A673 (cell line): ENCODE measurements at regions of chr12 and their contacts with region 1.

Region 1: GRCh38 chr12:20376984-20377383 is 8.6 kb downstream of the PDE3A start:
- DNase-seq: peak; percentile 48
- H3K4me3 ChIP-seq: no peak overlapping the region
- H3K27ac ChIP-seq: no peak overlapping the region
- H3K4me1 ChIP-seq: no peaks in the 10 kb centered on the region
- H3K27me3 ChIP-seq: peaks cover 40% of the 10 kb centered on the region
- CTCF ChIP-seq: peak; percentile 55; the same call in 1 of the 2 replicates

Region 2: GRCh38 chr12:19719672-19720071 is 657.3 kb before region 1 on chr12:
- CTCF ChIA-PET with region 1: no interaction called
- POLR2A ChIA-PET with region 1: no interaction called
- intact Hi-C with region 1: no loop called
- DNase-seq: no peak
- H3K4me3 ChIP-seq: no peak overlapping the region
- H3K27ac ChIP-seq: no peak overlapping the region
- H3K4me1 ChIP-seq: peaks cover 17% of the 10 kb centered on the region
- H3K27me3 ChIP-seq: no peaks in the 10 kb centered on the region
- CTCF ChIP-seq: no peak

Region 3: GRCh38 chr12:19739183-19739776 is 637.7 kb before region 1 on chr12:
- CTCF ChIA-PET with region 1: no interaction called
- POLR2A ChIA-PET with region 1: no interaction called
- intact Hi-C with region 1: loop called (anchors 2 kb)
- DNase-seq: peak; percentile 81
- H3K4me3 ChIP-seq: no peak overlapping the region
- H3K27ac ChIP-seq: no peak overlapping the region
- H3K4me1 ChIP-seq: no peaks in the 10 kb centered on the region
- H3K27me3 ChIP-seq: peaks cover 8% of the 10 kb centered on the region
- CTCF ChIP-seq: peak; percentile 74

Region 4: GRCh38 chr12:19757317-19757877 is 619.6 kb before region 1 on chr12:
- CTCF ChIA-PET with region 1: no interaction called
- POLR2A ChIA-PET with region 1: no interaction called
- intact Hi-C with region 1: loop called (anchors 5 kb)
- DNase-seq: peak; percentile 54
- H3K4me3 ChIP-seq: no peak overlapping the region
- H3K27ac ChIP-seq: no peak overlapping the region
- H3K4me1 ChIP-seq: no peaks in the 10 kb centered on the region
- H3K27me3 ChIP-seq: no peaks in the 10 kb centered on the region
- CTCF ChIP-seq: peak; percentile 76

Region 5: GRCh38 chr12:20578142-20578541 is 201.2 kb after region 1 on chr12:
- CTCF ChIA-PET with region 1: no interaction called
- POLR2A ChIA-PET with region 1: no interaction called
- intact Hi-C with region 1: no loop called
- DNase-seq: no peak
- H3K4me3 ChIP-seq: no peak overlapping the region
- H3K27ac ChIP-seq: no peak overlapping the region
- H3K4me1 ChIP-seq: no peaks in the 10 kb centered on the region
- H3K27me3 ChIP-seq: peaks cover 24% of the 10 kb centered on the region
- CTCF ChIP-seq: no peak